ENCODE measurements at regions of chr7 and their contacts with region 1.

Region 1: GRCh38 chr7:8295638-8296361 is 33.8 kb upstream of the ICA1 start:
- DNase-seq: peak; percentile 14
- H3K4me3 Mint-ChIP-seq: no peak overlapping the region
- H3K27ac Mint-ChIP-seq: no peak overlapping the region
- H3K4me1 Mint-ChIP-seq: peaks cover 2% of the 10 kb centered on the region
- H3K27me3 Mint-ChIP-seq: peaks cover 12% of the 10 kb centered on the region

Region 2: GRCh38 chr7:7424151-7424873 is 871.5 kb before region 1 on chr7:
- intact Hi-C with region 1: loop called (anchors 10 kb)
- DNase-seq: peak; percentile 12
- H3K4me3 Mint-ChIP-seq: peak overlapping the region; percentile 60
- H3K27ac Mint-ChIP-seq: no peak overlapping the region
- H3K4me1 Mint-ChIP-seq: peaks cover 9% of the 10 kb centered on the region
- H3K27me3 Mint-ChIP-seq: peaks cover 16% of the 10 kb centered on the region

Region 3: DNA sequence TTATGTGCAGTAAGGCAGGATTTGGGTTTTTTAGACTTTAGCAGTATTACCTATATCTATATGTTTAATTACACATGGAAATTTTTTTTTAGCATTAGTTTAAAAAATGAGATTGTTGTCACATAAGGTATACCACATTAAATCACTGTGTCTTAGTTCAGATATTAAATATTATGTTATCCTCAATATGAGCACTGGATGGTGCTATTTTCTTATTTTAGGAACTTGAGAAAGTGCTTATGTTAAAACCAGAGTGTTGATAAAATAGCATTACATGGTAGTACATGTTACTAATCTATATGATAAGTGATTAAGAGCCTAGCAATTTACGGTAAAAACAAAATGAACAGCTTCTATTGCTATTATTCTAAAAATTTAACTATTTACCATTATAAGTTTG is 700.3 kb before region 1 on chr7:
- intact Hi-C with region 1: loop called (anchors 10 kb)
- DNase-seq: no peak
- H3K4me3 Mint-ChIP-seq: no peak overlapping the region
- H3K27ac Mint-ChIP-seq: no peak overlapping the region
- H3K4me1 Mint-ChIP-seq: peaks cover 2% of the 10 kb centered on the region
- H3K27me3 Mint-ChIP-seq: no peaks in the 10 kb centered on the region

Region 4: DNA sequence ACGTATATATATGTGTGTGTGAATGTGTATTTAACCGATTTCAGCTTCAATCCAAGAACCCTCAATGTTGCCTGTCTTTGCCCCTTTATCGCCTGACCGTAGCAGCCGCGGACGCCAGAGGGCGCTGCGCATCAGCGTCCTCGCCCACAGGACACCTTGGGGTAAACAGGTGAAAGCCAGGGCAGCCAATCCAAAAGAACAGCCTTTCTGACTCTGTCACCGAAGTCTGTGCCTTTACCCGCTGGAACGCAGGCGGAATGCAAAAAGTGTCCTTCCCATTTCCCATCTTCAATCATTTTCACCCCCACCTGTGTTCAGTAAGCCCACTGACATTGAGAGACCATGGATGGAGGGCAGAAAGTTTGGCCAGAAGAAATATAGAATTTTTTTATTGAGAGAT is 141.2 kb after region 1 on chr7:
- intact Hi-C with region 1: no loop called
- DNase-seq: peak; percentile 34
- H3K4me3 Mint-ChIP-seq: no peak overlapping the region
- H3K27ac Mint-ChIP-seq: no peak overlapping the region
- H3K4me1 Mint-ChIP-seq: peaks cover 2% of the 10 kb centered on the region
- H3K27me3 Mint-ChIP-seq: peaks cover 84% of the 10 kb centered on the region

Measured in activated T-helper 2 cell treated with anti-CD3 and anti-CD28 coated beads, Interferon-gamma antibody, Interleukin-2, Interleukin-4, amounts not matched to agents 10 μg/mL and 5 μg/mL and 100 μg/mL, durations not matched to agents 14 hours and 24 hours and 36 hours (primary cell).